PC-3 (cell line): ENCODE measurements at regions of chr4 and their contacts with region 1.

Region 1: DNA sequence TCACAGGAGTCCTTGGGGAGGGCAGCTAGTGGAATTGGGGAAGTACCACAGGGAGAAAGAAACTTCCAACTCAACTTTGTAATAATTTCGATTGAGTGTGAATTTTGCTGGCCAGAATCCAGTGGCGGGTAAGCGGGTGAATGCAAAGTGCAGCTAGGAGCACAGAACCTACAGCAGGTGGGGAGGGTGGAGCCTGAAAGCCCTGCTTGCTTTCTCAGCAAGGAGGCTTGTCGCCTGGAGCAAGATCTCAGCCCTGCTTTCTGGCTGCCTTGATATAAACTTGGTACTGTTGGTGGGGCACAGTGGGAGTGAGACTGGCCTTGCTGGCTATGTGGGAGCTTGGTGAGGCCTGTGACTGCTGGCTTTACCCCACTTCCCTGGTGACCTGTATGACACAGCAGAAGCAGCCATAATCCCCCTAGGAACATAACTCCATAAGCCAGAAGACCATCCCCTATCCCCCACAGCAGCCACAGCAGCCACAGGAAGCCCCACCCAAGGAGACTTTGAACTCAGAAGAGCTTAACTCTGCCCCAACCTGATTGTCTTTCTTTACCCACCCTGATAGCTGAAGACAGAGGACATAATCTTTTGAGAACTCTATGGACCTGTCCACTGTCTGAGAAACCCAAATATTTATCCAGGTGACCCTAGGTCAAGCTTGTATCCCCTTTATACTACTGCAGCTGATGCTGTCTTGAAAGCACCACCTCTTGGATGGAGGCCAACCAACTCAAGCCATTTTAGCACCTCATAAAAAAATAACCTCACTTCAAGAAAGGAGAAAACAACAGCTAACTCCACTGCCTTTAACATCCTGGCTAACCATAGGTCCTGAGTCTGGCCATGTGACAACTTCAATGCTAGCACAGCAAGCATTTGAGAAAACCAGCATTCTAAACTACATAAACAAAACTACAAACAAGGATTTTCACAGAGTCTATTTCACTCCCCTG is 87.2 kb upstream of the PDE5A start:
- DNase-seq: no peak
- ATAC-seq: no peak
- H3K4me3 ChIP-seq: no peak overlapping the region
- H3K27ac ChIP-seq: no peak overlapping the region
- H3K4me1 ChIP-seq: no peaks in the 10 kb centered on the region
- H3K27me3 ChIP-seq: no peaks in the 10 kb centered on the region
- CTCF ChIP-seq: no peak

Region 2: DNA sequence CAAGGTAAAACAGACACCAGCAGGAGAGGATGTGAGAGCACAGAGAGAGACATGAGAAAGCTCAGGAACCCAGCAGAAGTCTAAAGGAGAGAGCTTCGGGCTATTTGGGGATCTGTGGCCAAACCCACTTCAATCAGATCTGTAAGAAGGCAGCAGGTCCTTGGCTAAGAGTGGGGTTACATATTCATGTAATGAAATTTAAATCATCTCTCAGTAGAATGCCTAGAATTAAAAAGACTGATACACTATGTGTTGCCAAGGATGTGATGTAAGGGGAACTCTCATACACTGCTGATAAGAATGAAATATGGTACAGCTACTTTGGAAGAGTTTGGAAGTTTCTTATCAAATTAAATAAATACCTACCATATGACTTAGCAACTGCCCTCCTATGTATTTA is 122.9 kb before region 1 on chr4:
- CTCF ChIA-PET with region 1: no interaction called
- POLR2A ChIA-PET with region 1: interaction called, 10 read pairs
- intact Hi-C with region 1: no loop called
- DNase-seq: no peak
- ATAC-seq: no peak
- H3K4me3 ChIP-seq: no peak overlapping the region
- H3K27ac ChIP-seq: no peak overlapping the region
- H3K4me1 ChIP-seq: no peaks in the 10 kb centered on the region
- H3K27me3 ChIP-seq: no peaks in the 10 kb centered on the region
- CTCF ChIP-seq: no peak